OCI-LY7 (cell line): ENCODE measurements at regions of chr5 and their contacts with region 1.

Region 1: DNA sequence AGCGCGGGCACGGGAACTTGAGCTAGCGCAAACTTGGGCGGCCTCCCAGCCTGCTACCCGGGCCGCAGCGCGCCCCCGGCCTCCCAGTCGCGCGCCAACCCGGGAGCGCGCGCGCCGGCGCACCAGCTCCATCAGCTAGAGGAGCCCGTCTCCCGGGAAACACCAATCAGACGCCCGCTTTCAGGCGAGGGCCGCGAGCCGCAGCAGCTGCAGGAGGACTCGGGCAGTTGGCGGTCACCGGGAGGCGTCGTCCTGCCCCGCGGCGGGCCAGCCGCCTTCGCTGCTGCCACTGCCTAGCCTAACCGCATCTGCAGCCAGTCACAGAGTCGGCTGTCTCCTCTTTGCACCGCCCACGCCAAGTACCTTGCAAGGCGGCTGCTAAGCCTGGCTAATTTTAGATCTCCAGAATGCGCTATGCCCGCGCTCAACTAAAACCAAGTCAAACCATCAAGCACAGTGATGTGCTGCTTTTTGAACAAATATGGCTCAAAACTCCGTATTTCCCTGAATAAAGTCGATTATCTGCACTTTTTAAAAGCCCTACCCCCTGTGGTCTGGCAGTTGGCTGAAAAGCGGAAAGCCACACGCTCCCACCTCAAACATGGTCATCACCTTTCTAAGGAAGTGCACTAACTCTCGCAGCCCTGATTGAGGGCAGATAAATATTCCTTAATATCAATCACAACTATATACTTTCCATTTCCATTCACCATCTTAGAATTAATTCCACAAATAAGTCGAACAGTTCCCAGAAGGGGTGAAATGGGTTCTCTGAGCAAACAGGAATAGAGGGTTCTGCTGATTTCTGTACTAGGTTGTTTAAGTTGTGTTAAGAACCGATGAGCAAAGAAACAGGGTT is 221.8 kb downstream of the MEF2C start:
- DNase-seq: peak; percentile 83
- H3K4me3 ChIP-seq: peak overlapping the region; percentile 68
- H3K27ac ChIP-seq: no peak overlapping the region
- H3K4me1 ChIP-seq: peaks cover 30% of the 10 kb centered on the region
- CTCF ChIP-seq: no peak

Region 2: DNA sequence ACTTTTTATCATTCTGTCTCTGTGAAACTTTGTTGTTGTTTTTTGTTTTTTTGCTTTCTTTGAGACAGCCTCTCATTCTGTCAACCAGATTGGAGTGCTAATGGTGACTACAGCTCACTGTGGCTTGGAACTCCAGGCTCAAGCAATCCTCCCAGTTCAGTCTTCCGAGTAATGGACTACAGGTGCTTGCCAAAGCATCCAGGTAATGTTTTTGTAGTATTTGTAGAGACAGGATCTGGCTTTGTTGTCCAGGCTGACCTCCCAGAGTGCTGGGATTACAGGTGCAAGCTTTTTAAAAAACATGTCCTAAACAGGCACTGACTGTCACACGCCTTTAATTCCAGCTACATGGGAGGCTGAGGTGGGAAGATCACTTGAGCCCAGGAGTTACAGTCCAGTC is 13.3 kb before region 1 on chr5:
- CTCF ChIA-PET with region 1: no interaction called
- POLR2A ChIA-PET with region 1: interaction called, 12 read pairs
- intact Hi-C with region 1: no loop called
- DNase-seq: no peak
- H3K4me3 ChIP-seq: no peak overlapping the region
- H3K27ac ChIP-seq: no peak overlapping the region
- H3K4me1 ChIP-seq: no peaks in the 10 kb centered on the region
- CTCF ChIP-seq: no peak

Region 3: GRCh38 chr5:88674356-88675167 is 13.4 kb after region 1 on chr5:
- CTCF ChIA-PET with region 1: interaction called, 16 read pairs
- POLR2A ChIA-PET with region 1: interaction called, 88 read pairs
- intact Hi-C with region 1: loop called (anchors 1 kb)
- DNase-seq: peak; percentile 91
- H3K4me3 ChIP-seq: peak overlapping the region; percentile 72
- H3K27ac ChIP-seq: peak overlapping the region; percentile 97
- H3K4me1 ChIP-seq: peaks cover 36% of the 10 kb centered on the region
- CTCF ChIP-seq: no peak